ENCODE measurements at regions of chr10 and their contacts with region 1.

Region 1: DNA sequence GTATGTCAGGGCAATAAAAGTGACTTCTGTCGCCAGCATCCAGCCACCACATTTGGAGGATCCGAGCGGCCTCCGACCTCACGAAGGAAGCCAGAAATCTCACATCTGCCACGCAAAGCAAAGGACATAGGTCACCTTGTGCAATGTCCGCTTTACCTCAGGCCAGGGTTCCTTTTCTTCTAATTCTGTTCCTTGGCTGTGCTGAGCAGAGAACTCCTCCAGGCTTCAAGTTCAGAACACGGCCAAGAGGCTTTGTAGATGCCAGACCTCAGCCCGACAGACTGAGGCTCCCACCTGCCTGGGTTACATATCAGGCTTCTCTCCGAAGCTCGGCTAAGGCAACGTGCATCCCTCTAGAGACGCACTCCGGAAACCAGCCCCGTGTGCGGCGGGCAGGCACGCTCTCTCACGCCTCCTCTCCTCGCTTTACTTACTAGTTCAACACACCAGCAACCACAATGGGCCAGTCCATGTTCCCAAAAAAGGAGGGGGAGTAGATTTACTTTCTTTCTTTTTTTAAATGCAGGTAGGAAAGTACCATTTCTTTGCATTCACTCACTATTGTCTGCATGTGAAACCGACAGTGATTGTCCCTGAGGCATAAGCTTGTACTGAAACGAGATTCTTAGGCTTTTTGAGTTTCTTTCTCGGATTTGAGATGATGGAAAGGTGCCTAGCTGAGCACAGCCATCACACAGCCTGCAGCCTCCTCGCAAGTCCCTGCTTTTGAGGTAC is 122.4 kb upstream of the AFAP1L2 start:
- DNase-seq: peak; percentile 97
- ATAC-seq: peak; percentile 91
- H3K4me3 Mint-ChIP-seq: peak overlapping the region; percentile 87
- H3K27ac Mint-ChIP-seq: peak overlapping the region; percentile 93
- H3K4me1 Mint-ChIP-seq: peaks cover 51% of the 10 kb centered on the region
- H3K27me3 Mint-ChIP-seq: no peaks in the 10 kb centered on the region
- CTCF ChIP-seq: no peak

Region 2: DNA sequence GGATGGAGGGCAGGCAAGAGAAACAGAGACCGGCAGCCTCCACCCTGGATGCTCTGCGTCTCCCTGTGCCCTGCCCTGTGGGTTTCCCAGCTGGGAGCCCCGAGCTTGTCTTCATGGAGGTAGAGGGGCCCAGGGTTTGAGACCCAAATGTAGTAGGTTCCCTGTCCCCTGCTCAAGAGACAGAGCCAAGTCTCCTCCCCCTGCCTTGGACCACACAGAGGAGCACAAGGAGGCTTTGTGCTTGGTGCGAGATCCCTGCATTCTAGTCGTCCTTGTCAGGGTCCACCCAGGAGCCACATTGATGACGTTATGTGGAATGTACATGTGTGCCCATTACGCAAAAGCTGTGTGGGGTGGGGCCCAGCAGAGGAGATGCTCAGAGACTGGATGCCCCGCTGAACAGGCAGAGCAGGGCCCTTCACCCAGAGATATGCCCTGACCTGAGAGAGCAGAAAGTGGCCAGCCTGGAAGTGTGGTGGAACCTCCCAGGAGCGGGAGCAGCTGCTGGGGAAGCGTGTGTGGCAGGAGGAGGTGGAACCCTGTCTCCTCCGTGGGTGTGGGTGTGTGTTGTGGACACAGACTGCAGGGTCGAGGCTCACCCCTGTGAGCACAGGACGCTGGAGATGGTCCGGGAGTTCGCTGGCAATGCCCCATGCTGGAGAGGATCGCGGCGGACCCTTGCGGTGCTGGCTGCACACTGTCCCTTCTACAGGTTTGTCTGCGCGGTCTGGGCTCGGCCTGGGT is 248.4 kb before region 1 on chr10:
- CTCF ChIA-PET with region 1: no interaction called
- POLR2A ChIA-PET with region 1: no interaction called
- intact Hi-C with region 1: no loop called
- DNase-seq: no peak
- ATAC-seq: no peak
- H3K4me3 Mint-ChIP-seq: no peak overlapping the region
- H3K27ac Mint-ChIP-seq: no peak overlapping the region
- H3K4me1 Mint-ChIP-seq: no peaks in the 10 kb centered on the region
- H3K27me3 Mint-ChIP-seq: peaks cover 7% of the 10 kb centered on the region
- CTCF ChIP-seq: no peak

Region 3: DNA sequence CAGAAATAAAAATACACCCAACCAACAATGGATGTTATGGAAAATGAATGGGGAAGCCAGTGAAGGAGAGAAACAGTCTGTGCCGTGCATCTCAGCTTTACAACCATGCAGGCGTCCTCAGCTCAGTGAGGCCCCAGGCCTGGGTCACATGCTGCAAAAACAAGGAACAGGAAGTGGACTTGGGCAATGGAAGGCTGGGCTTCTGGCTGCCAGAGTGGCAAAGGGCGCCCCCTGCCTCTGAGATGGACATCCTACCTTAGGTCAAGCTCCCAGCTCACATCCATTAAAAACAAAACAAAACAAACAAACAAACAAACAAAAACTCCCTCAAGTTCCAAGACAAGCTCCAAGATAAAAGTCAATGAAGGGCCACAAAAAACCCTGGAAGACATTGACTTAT is 67.7 kb before region 1 on chr10:
- CTCF ChIA-PET with region 1: no interaction called
- POLR2A ChIA-PET with region 1: no interaction called
- intact Hi-C with region 1: no loop called
- DNase-seq: peak; percentile 70
- ATAC-seq: peak; percentile 74
- H3K4me3 Mint-ChIP-seq: no peak overlapping the region
- H3K27ac Mint-ChIP-seq: peak overlapping the region; percentile 36
- H3K4me1 Mint-ChIP-seq: peaks cover 22% of the 10 kb centered on the region
- H3K27me3 Mint-ChIP-seq: no peaks in the 10 kb centered on the region
- CTCF ChIP-seq: peak; percentile 43

Region 4: DNA sequence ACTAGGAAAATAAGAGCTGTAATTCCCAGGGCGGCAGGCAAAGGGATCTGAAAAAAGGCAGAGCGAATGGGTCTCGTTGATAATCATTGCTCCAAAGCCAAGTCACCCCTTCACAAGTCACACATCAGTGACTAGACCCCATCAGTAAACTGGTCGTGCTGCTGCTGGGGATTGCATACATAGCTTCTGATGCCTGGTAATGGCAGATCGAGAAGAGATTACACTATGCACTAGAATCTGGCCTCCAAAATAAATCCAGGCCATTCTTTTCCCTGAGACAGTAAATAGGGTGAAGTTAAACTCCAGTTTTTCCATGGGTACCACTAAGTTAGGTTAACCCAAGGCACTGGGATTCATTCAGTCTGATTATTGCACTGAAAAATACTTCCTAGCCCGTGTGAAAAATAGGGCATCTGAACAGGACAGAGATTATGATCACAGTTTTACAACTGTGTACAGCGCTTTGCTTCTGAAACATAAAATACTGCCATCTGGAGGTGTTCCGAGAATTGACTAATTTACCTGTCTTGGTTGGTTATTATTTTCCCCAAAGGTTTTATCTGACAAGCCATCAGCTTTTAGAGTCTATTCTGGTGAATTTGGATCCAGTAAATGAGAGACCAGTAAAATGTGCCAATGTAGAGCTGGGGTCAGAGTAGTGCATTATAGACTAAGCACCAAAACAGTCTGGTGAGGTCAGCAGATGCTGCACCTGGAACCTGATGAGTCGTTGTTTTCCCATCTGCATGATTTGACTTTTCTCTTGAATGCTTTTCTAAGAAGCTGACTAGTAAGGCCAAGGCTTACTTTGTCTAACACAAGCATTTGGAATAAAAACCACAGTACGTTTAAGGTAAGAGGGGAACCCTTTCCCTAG is 39.5 kb before region 1 on chr10:
- CTCF ChIA-PET with region 1: interaction called, 14 read pairs
- POLR2A ChIA-PET with region 1: interaction called, 16 read pairs
- intact Hi-C with region 1: loop called (anchors 5 kb)
- DNase-seq: peak; percentile 50
- ATAC-seq: peak; percentile 72
- H3K4me3 Mint-ChIP-seq: no peak overlapping the region
- H3K27ac Mint-ChIP-seq: peak overlapping the region; percentile 76
- H3K4me1 Mint-ChIP-seq: peaks cover 56% of the 10 kb centered on the region
- H3K27me3 Mint-ChIP-seq: no peaks in the 10 kb centered on the region
- CTCF ChIP-seq: peak; percentile 42

Region 5: DNA sequence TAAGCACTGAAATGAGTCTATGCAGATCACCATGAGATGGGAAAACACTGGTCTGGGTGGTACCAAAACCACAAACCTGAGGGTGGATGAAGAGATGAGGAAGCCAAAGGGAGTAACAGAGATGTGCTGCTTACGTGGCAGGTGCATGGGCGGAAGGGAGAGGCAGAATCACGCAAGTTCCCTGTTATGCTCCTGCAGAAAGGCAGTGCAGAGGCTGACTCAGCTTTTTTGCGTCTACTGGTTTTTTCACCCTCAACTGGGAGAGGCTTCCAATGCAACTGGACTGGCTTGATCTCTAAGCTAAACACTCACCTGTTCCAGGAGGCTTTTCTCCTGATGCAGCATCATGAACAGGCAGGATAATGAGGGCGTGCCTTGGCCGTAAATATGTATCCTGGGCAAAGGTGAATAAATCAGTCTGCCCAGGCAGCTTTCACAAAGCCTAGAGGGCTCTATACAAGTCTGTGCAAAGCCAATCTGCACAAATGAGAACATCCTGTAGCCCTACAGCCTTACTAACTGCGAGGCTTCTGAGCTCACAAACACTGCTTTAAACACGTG is 27.0 kb before region 1 on chr10:
- CTCF ChIA-PET with region 1: interaction called, 35 read pairs
- POLR2A ChIA-PET with region 1: interaction called, 138 read pairs
- intact Hi-C with region 1: loop called (anchors 5 kb)
- DNase-seq: peak; percentile 93
- ATAC-seq: peak; percentile 66
- H3K4me3 Mint-ChIP-seq: peak overlapping the region; percentile 68
- H3K27ac Mint-ChIP-seq: peak overlapping the region; percentile 95
- H3K4me1 Mint-ChIP-seq: peaks cover 90% of the 10 kb centered on the region
- H3K27me3 Mint-ChIP-seq: no peaks in the 10 kb centered on the region
- CTCF ChIP-seq: no peak

Region 6: GRCh38 chr10:114515298-114515914 is 11.3 kb before region 1 on chr10:
- CTCF ChIA-PET with region 1: interaction called, 252 read pairs
- POLR2A ChIA-PET with region 1: interaction called, 71 read pairs
- intact Hi-C with region 1: loop called (anchors 1 kb)
- DNase-seq: no peak
- ATAC-seq: peak; percentile 46
- H3K4me3 Mint-ChIP-seq: peak overlapping the region; percentile 73
- H3K27ac Mint-ChIP-seq: peak overlapping the region; percentile 91
- H3K4me1 Mint-ChIP-seq: peaks cover 94% of the 10 kb centered on the region
- H3K27me3 Mint-ChIP-seq: no peaks in the 10 kb centered on the region
- CTCF ChIP-seq: no peak

Region 7: DNA sequence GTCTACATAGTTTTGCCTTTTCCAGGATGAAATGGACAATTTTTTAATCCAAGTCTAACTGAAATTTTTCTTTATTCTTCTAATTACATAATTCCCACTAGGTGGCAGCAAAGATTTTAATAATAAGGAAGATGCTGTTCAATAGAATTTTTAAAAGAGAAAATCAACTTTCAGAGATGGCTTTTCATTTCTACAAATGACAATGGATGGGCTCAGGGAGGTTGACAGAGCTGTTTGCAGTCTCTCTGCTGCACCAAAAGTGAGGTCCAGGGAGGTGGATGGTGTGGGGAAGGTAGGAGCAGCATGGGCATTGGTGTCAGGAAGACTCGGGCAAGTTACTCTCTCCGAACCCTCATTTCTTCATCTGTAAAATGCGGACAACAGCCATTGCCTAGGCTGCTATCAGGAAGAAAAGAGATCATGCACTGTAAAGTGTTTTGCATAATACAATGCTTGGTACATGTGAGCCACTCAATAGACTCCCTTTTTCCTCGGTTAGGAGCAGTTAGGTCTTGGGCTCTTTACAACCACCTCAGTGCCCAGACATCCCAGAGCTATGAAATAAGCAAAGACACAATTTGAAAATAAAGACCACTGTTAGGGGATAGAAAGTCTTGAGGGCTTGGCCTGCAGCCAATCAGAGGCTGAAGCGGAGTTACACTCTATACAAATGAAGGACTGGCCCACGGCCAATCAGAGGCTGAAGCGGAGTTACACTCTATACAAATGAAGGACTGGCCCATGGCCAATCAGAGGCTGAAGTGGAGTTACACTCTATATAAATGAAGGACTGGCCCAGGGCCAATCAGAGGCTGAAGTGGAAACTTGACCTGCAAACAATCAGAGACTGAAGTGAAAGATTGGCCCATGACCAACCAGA is 24.3 kb after region 1 on chr10:
- CTCF ChIA-PET with region 1: interaction called, 252 read pairs
- POLR2A ChIA-PET with region 1: interaction called, 251 read pairs
- intact Hi-C with region 1: no loop called
- DNase-seq: no peak
- ATAC-seq: no peak
- H3K4me3 Mint-ChIP-seq: no peak overlapping the region
- H3K27ac Mint-ChIP-seq: no peak overlapping the region
- H3K4me1 Mint-ChIP-seq: peaks cover 18% of the 10 kb centered on the region
- H3K27me3 Mint-ChIP-seq: no peaks in the 10 kb centered on the region
- CTCF ChIP-seq: peak; percentile 78

Region 8: GRCh38 chr10:114638821-114639625 is 112.4 kb after region 1 on chr10:
- CTCF ChIA-PET with region 1: no interaction called
- POLR2A ChIA-PET with region 1: no interaction called
- intact Hi-C with region 1: no loop called
- DNase-seq: peak; percentile 3
- ATAC-seq: no peak
- H3K4me3 Mint-ChIP-seq: no peak overlapping the region
- H3K27ac Mint-ChIP-seq: no peak overlapping the region
- H3K4me1 Mint-ChIP-seq: no peaks in the 10 kb centered on the region
- H3K27me3 Mint-ChIP-seq: peaks cover 3% of the 10 kb centered on the region
- CTCF ChIP-seq: no peak